A549 (cell line): ENCODE measurements at regions of chr12 and their contacts with region 1.

Region 1: DNA sequence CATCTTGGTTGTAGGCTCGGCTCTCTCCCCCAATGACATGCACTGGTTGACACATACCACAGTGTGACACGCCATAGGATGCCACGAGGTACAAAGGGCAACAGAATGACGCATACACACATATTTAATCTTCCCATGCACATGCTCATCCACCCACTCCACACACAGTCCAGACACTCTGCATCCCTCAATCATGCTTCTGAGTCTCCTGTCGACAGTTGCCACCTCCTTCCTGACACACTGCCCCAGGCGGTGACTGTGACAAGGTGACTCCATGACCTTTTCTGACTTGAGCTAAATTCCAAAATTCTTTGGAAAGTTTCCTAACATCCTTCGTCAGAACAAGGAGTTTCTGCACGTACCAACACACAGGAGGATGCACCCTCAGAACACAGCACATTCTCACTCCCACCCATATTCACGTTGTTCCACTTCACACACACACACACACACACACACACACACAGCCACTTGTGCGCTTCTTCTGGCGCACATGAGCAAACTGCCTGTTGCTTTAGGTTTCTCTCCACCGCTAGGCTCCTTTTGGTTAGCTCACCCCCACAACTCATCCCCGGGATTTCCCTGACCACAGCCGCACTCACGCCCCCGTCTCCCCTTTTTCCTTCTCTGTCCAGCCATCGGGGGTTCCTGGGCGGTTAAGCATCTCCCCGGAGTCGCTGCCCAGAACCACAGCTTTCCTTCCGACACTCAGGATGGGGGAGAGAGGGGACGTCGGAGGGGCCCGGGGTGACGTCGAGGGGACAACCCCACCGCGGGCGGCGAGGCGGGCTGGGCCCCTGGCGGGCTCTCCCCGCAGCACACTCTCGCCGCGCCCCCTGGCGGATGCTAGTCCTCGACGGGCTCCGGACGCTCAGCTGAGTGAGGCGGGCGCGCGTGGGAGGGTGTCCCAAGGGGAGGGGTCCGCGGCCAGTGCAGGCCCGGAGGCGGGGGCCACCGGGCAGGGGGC is 524 bp upstream of the WNT1 start:
- DNase-seq: peak; percentile 64 to 74
- ATAC-seq: peak; percentile 69 to 85
- H3K4me3 ChIP-seq: peak overlapping the region; percentile 42; the same call in 2 of the 3 replicates
- H3K27ac ChIP-seq: 0 out of 6 replicates have a peak overlapping the region, but pooled peaks of 1 of the 2 experiments have one; percentile 31
- H3K4me1 ChIP-seq: peaks cover 16% of the 10 kb centered on the region; the same call in 2 of the 3 replicates
- CTCF ChIP-seq: peak; percentile 70
- EP300 ChIP-seq: no peak
- POLR2A ChIP-seq: no peak
- RAD21 ChIP-seq: peak in 1 of 2 experiments; percentile 39; a peak in 3 of 5 replicates

Region 2: GRCh38 chr12:49037111-49037946 is 59.7 kb after region 1 on chr12:
- CTCF ChIA-PET with region 1: interaction called, 10 read pairs
- POLR2A ChIA-PET with region 1: no interaction called
- DNase-seq: no peak
- ATAC-seq: no peak
- H3K4me3 ChIP-seq: no peak overlapping the region
- H3K27ac ChIP-seq: no peak overlapping the region
- H3K4me1 ChIP-seq: no peaks in the 10 kb centered on the region
- CTCF ChIP-seq: no peak
- EP300 ChIP-seq: no peak
- POLR2A ChIP-seq: no peak
- RAD21 ChIP-seq: no peak